Dendritic cell treated with granulocyte-macrophage colony-stimulating factor and Interleukin-4, amounts not matched to agents 40 ng/mL and 50 ng/mL, for 4 days (primary cell): ENCODE measurements at regions of chr20 and their contacts with region 1.

Region 1: DNA sequence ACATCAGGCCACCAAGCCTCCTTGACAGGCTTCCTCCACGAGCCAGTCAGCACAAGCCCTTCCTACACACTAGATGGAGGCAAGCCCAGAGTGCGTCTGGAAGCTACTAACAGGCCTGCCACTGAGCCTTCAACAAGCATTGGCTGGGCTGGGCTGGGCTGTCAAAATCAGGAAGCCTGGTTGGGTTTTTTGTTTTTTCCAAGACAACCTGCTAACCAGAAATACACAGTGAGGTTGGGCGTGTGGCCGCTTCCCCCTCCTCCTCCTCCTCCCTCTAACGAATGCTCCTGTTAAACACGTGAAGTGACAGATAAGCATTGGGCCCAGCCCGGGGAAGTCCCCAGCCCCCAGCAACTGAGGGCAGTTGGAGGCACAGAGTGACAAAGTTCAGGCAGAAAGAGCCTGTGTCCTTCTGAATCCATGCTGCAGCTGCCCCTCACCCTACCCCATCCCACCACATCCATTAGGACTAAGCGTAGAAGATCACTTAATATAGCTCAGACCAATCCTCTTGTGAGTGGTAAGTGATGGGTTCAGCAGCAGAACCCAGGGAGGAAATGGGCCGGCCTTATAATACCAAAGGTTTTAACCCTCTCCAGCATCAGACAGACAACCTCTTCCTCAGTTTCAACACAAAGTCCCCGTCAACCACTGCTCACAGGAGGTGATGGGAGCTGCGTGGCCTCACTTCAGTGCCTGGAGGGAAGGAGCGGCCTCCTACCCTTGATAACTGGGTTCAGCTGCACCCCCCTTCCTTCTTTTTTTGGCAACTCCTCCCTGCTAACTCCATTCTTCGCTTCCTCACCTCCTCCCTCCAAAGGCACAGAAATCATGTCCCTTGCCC is 1.1 kb downstream of the NFATC2 start:
- H3K4me3 Mint-ChIP-seq: peak overlapping the region; percentile 94
- H3K27ac Mint-ChIP-seq: peak overlapping the region; percentile 90
- H3K4me1 Mint-ChIP-seq: peaks cover 47% of the 10 kb centered on the region
- H3K27me3 Mint-ChIP-seq: peaks cover 49% of the 10 kb centered on the region

Region 2: DNA sequence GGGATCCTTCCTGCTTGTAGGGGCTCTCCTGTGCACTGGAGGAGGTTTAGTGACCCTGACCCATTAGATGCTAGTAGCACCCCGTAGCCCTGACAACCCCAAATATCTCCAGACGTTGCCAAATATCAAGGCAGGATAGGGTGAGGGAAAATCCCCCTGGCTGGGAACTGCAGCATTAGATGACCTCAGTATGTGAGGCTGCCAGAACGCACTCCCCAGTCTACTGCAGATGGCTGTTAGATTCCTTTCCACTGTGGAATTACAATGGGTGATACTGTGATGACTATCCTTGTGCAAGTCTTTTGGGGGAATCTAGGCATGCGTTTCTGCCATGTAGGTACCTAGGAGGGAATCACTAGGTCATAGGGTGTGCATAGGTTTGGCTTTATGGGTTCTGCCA is 292.2 kb before region 1 on chr20:
- intact Hi-C with region 1: no loop called
- H3K4me3 Mint-ChIP-seq: no peak overlapping the region
- H3K27ac Mint-ChIP-seq: no peak overlapping the region
- H3K4me1 Mint-ChIP-seq: no peaks in the 10 kb centered on the region
- H3K27me3 Mint-ChIP-seq: peaks cover 3% of the 10 kb centered on the region

Region 3: GRCh38 chr20:51500311-51500710 is 41.1 kb before region 1 on chr20:
- intact Hi-C with region 1: loop called (anchors 5 kb)
- H3K4me3 Mint-ChIP-seq: no peak overlapping the region
- H3K27ac Mint-ChIP-seq: no peak overlapping the region
- H3K4me1 Mint-ChIP-seq: peaks cover 82% of the 10 kb centered on the region
- H3K27me3 Mint-ChIP-seq: peaks cover 4% of the 10 kb centered on the region

Region 4: GRCh38 chr20:51531141-51531710 is 10.2 kb before region 1 on chr20:
- intact Hi-C with region 1: loop called (anchors 1 kb)
- H3K4me3 Mint-ChIP-seq: no peak overlapping the region
- H3K27ac Mint-ChIP-seq: peak overlapping the region; percentile 90
- H3K4me1 Mint-ChIP-seq: peaks cover 88% of the 10 kb centered on the region
- H3K27me3 Mint-ChIP-seq: no peaks in the 10 kb centered on the region

Region 5: DNA sequence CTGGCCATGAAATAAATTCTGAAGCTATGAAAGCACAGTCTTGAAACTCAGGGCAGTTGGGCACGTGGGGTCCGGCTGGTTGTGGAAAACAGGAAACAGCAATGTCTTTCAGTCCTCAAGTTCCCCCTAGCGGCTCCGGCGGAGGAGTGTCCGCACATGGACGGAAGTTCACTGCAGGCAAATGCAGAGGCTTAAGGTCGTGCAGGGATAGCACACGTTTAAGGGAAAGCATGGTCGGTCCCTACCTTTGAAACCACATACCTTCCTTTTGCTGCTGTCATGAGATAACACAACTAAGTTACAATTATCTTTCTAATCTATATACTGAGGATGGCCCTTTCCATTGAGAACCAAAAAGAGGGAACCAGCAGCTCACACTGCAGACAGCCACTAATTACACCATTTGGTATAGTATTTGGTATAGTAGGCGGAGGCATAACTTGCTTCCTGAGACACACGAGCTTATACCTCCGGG is 53.7 kb after region 1 on chr20:
- intact Hi-C with region 1: loop called (anchors 1 kb)
- H3K4me3 Mint-ChIP-seq: peak overlapping the region; percentile 2
- H3K27ac Mint-ChIP-seq: no peak overlapping the region
- H3K4me1 Mint-ChIP-seq: peaks cover 10% of the 10 kb centered on the region
- H3K27me3 Mint-ChIP-seq: peaks cover 9% of the 10 kb centered on the region